GM12878 (cell line): ENCODE measurements at regions of chr19 and their contacts with region 1.

Region 1: GRCh38 chr19:10510301-10510802 is 6.9 kb downstream of the S1PR5 start:
- DNase-seq: no peak
- ATAC-seq: peak; percentile 39
- H3K4me3 ChIP-seq: no peak overlapping the region
- H3K27ac ChIP-seq: no peak overlapping the region
- H3K4me1 ChIP-seq: peaks cover 8% of the 10 kb centered on the region
- H3K27me3 ChIP-seq: peaks cover 9 to 14% of the 10 kb centered on the region in 2 experiments
- CTCF ChIP-seq: peak; percentile 55 to 91 (median 88)
- EP300 ChIP-seq: no peak
- POLR2A ChIP-seq: no peak
- RAD21 ChIP-seq: no peak

Region 2: GRCh38 chr19:10478903-10479384 is 31.4 kb before region 1 on chr19:
- CTCF ChIA-PET with region 1: interaction called, 13 read pairs
- POLR2A ChIA-PET with region 1: interaction called, 3 read pairs
- RAD21 ChIA-PET with region 1: interaction called, 3 read pairs
- SMC1A ChIA-PET with region 1: interaction called, 5 read pairs
- in situ Hi-C with region 1: no loop called
- intact Hi-C with region 1: no loop called
- DNase-seq: no peak
- ATAC-seq: peak; percentile 70
- H3K4me3 ChIP-seq: no peak overlapping the region
- H3K27ac ChIP-seq: no peak overlapping the region
- H3K4me1 ChIP-seq: no peaks in the 10 kb centered on the region
- H3K27me3 ChIP-seq: no peaks in the 10 kb centered on the region; a peak in 1 of 4 replicates
- CTCF ChIP-seq: peak; percentile 16 to 56 (median 27); a peak in 5 of 6 replicates
- EP300 ChIP-seq: no peak
- POLR2A ChIP-seq: no peak
- RAD21 ChIP-seq: peak; percentile 10; the same call in 1 of the 2 replicates

Region 3: GRCh38 chr19:10896580-10897526 is 386.5 kb after region 1 on chr19:
- CTCF ChIA-PET with region 1: no interaction called
- POLR2A ChIA-PET with region 1: no interaction called
- RAD21 ChIA-PET with region 1: no interaction called
- SMC1A ChIA-PET with region 1: no interaction called
- in situ Hi-C with region 1: no loop called
- intact Hi-C with region 1: no loop called
- DNase-seq: no peak
- ATAC-seq: no peak
- H3K4me3 ChIP-seq: no peak overlapping the region
- H3K27ac ChIP-seq: no peak overlapping the region
- H3K4me1 ChIP-seq: peaks cover 4% of the 10 kb centered on the region; the same call in 1 of the 2 replicates
- H3K27me3 ChIP-seq: no peaks in the 10 kb centered on the region
- CTCF ChIP-seq: no peak
- EP300 ChIP-seq: no peak
- POLR2A ChIP-seq: no peak
- RAD21 ChIP-seq: no peak